Activated naive CD4-positive, alpha-beta T cell treated with anti-CD3 and anti-CD28 coated beads for 36 hours (primary cell): ENCODE measurements at regions of chr11 and their contacts with region 1.

Region 1: GRCh38 chr11:95705485-95706124 is 84.0 kb downstream of the FAM76B start:
- DNase-seq: peak; percentile 95
- H3K4me3 Mint-ChIP-seq: no peak overlapping the region
- H3K27ac Mint-ChIP-seq: no peak overlapping the region
- H3K4me1 Mint-ChIP-seq: peaks cover 16% of the 10 kb centered on the region
- H3K27me3 Mint-ChIP-seq: no peaks in the 10 kb centered on the region

Region 2: DNA sequence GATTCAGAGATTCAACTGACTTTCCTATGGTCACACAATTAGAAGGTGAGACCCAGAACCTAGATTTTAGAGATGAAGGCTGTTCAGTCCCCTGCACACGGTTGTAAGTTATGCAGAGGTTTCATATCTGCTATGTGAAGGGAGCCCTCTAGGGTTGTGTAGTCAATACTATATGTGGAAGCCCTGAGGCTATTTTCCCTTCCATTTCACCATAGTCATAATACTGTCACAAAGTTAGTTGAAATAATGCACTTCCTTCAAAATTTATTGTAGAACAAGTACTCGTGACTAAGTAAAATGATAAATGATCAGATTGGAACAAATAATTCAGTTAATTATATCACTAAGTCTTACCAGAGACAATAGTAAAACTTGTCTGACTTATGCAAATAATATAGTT is 567.2 kb before region 1 on chr11:
- CTCF ChIA-PET with region 1: no interaction called
- intact Hi-C with region 1: no loop called
- DNase-seq: no peak
- H3K4me3 Mint-ChIP-seq: no peak overlapping the region
- H3K27ac Mint-ChIP-seq: no peak overlapping the region
- H3K4me1 Mint-ChIP-seq: peaks cover 7% of the 10 kb centered on the region
- H3K27me3 Mint-ChIP-seq: peaks cover 9% of the 10 kb centered on the region

Region 3: DNA sequence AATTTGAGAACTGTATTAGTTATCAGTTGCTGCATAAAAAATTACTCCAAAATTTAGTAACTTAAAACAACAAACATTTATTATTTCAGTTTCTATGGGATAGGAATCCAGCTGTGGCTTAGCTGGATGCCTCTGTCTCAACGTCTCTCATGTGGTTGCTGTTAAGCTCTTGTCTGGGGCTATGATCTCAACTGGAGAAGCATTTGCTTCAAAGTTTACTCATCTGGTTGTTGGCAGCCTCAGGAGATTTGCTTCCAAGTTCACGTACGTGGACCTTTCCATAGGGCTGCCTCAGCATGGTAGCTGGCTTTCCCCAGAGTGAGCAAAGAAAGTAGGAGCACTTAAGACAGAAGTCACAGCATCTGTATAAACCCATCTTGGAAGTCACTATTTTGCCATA is 329.7 kb before region 1 on chr11:
- CTCF ChIA-PET with region 1: interaction called, 7 read pairs
- intact Hi-C with region 1: loop called (anchors 5 kb)
- DNase-seq: no peak
- H3K4me3 Mint-ChIP-seq: no peak overlapping the region
- H3K27ac Mint-ChIP-seq: no peak overlapping the region
- H3K4me1 Mint-ChIP-seq: peaks cover 2% of the 10 kb centered on the region
- H3K27me3 Mint-ChIP-seq: no peaks in the 10 kb centered on the region

Region 4: DNA sequence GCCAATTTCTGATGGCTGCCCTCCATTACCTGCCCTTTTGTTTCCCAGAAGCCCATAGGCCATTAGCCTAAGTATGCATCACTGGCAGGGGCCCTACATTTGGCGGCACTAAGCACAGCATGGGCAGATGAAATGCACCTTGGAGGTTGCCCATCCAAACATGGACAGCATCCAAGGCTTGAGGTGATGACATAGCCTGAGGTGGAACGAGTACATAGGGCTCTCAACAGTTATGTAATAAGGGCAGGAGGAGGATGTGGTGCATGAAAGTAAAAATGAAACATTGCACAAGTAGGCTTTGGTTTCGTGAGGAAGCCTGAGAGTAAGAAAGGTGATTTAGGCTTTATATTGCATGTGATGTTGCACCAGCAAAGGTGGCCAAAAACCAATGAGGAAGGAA is 64.1 kb before region 1 on chr11:
- CTCF ChIA-PET with region 1: interaction called, 5 read pairs
- intact Hi-C with region 1: loop called (anchors 1 kb)
- DNase-seq: peak; percentile 52
- H3K4me3 Mint-ChIP-seq: no peak overlapping the region
- H3K27ac Mint-ChIP-seq: peak overlapping the region; percentile 55
- H3K4me1 Mint-ChIP-seq: peaks cover 22% of the 10 kb centered on the region
- H3K27me3 Mint-ChIP-seq: no peaks in the 10 kb centered on the region

Region 5: GRCh38 chr11:95688580-95689189 is 16.9 kb before region 1 on chr11:
- CTCF ChIA-PET with region 1: interaction called, 12 read pairs
- intact Hi-C with region 1: no loop called
- DNase-seq: no peak
- H3K4me3 Mint-ChIP-seq: no peak overlapping the region
- H3K27ac Mint-ChIP-seq: no peak overlapping the region
- H3K4me1 Mint-ChIP-seq: peaks cover 38% of the 10 kb centered on the region
- H3K27me3 Mint-ChIP-seq: no peaks in the 10 kb centered on the region

Region 6: GRCh38 chr11:95764267-95764898 is 58.8 kb after region 1 on chr11:
- CTCF ChIA-PET with region 1: interaction called, 8 read pairs
- intact Hi-C with region 1: loop called (anchors 1 kb)
- DNase-seq: no peak
- H3K4me3 Mint-ChIP-seq: no peak overlapping the region
- H3K27ac Mint-ChIP-seq: no peak overlapping the region
- H3K4me1 Mint-ChIP-seq: no peaks in the 10 kb centered on the region
- H3K27me3 Mint-ChIP-seq: peaks cover 1% of the 10 kb centered on the region

Region 7: DNA sequence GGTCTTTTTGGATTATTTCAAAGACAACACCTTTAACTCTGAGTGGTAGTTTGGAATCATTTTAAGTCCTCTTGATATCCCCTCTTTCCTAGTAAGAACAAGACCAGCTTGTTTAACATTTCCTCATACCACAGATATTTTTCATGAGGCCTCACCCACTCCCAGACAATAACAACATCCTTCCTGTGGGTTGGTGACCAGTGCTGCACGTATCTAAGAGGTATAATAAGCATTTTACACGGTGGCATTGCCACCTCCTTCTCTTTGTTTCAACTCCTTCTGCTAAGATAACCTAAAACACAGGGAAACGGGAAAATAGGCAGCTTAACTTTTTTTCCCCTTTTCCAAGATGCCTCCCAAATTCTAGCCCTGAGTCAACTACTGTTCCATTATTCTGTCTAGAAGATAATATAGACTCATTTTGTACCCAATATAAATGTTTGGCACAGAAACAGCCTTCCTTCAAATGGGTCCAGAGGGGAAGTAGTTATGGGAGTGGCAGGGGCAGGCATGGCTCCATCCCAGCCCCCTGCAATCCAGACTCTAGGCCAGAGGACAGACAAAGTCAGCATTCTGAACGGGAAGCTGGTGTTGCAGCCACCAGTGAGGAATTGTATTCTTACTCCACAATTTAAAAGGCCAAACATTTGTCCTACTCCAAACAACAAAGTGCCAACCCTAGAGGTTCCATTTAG is 608.9 kb after region 1 on chr11:
- CTCF ChIA-PET with region 1: no interaction called
- intact Hi-C with region 1: no loop called
- DNase-seq: no peak
- H3K4me3 Mint-ChIP-seq: no peak overlapping the region
- H3K27ac Mint-ChIP-seq: peak overlapping the region; percentile 6
- H3K4me1 Mint-ChIP-seq: peaks cover 88% of the 10 kb centered on the region
- H3K27me3 Mint-ChIP-seq: no peaks in the 10 kb centered on the region